ENCODE measurements at regions of chr18 and their contacts with region 1.

Region 1: GRCh38 chr18:50726960-50727589 is 92.7 kb downstream of the MRO start:
- DNase-seq: no peak
- ATAC-seq: no peak

Region 2: GRCh38 chr18:50559752-50560680 is 167.1 kb before region 1 on chr18 and contains the start of gene MAPK4:
- intact Hi-C with region 1: loop called (anchors 2 kb)
- DNase-seq: no peak
- ATAC-seq: peak; percentile 93
- total RNA-seq, gene MAPK4: 34.1 TPM

Region 3: DNA sequence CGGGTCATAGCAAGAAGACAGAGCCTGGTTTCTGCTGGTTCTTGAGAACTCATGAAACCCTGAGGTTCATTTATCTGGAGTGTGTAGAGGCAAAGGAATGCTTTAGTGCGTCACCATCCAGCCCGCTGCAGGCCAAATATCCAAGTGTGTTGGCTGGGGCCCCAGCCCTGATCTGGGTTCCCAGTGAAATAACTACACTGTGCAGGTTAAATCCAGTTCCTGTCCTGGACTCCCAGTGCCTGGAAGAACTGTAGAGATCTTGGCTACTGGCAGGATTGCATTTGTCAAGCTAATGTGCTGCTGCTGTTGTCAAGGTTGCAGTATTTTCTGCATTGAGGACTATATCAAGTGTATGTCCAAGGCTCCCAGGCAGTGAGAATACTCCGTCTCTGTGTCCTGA is 77.3 kb before region 1 on chr18:
- intact Hi-C with region 1: loop called (anchors 5 kb)
- DNase-seq: peak; percentile 79
- ATAC-seq: peak; percentile 85

Region 4: GRCh38 chr18:50665519-50665918 is 61.6 kb before region 1 on chr18:
- intact Hi-C with region 1: loop called (anchors 5 kb)
- DNase-seq: peak; percentile 80
- ATAC-seq: peak; percentile 89

Region 5: GRCh38 chr18:50687491-50688270 is 39.4 kb before region 1 on chr18:
- intact Hi-C with region 1: no loop called
- DNase-seq: no peak
- ATAC-seq: no peak

Measured in Right ventricle myocardium inferior (tissue), 1 donor.